WTC11 (cell line): ENCODE measurements at regions of chr2 and their contacts with region 1.

Region 1: DNA sequence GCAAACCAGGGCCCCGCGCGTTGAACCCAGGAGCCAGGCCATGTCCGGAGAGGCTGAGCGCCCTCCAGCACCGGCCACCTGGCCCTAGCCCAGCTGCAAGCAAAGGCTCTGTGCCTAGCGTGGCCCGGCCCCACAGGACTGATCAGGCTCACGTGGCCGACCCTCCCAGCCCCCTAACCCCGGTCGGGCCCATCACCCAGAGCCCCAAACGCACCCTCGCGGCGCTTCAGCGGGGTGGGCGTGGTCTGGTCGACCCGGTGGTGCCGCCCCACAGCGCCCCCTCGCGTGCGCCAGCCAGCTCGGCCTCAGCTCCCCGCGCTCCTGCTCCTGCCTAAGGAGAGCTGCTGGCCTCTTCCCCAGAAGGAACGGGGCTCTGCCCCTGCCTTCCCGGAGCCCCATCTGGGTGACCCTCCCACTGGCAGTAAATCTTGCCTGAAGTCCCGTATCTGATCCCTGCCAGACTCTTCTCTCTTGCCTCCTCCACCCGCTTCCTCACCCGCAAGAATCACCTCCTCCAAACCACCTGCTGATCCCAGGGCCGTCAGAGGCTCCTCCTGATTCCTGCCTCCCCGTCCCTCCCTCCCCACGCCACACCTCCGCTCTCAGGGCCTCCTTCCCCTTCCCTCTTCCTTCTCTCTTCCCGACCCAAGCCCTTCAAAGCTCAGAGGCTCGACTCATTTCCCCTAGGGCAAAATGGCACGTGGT is 12.3 kb upstream of the TEX51 start:
- DNase-seq: peak; percentile 88
- ATAC-seq: peak; percentile 91
- H3K4me3 Mint-ChIP-seq: peak overlapping the region; percentile 72
- H3K27ac Mint-ChIP-seq: no peak overlapping the region
- H3K4me1 Mint-ChIP-seq: peaks cover 13% of the 10 kb centered on the region
- H3K27me3 Mint-ChIP-seq: peaks cover 21% of the 10 kb centered on the region
- CTCF ChIP-seq: peak; percentile 73

Region 2: DNA sequence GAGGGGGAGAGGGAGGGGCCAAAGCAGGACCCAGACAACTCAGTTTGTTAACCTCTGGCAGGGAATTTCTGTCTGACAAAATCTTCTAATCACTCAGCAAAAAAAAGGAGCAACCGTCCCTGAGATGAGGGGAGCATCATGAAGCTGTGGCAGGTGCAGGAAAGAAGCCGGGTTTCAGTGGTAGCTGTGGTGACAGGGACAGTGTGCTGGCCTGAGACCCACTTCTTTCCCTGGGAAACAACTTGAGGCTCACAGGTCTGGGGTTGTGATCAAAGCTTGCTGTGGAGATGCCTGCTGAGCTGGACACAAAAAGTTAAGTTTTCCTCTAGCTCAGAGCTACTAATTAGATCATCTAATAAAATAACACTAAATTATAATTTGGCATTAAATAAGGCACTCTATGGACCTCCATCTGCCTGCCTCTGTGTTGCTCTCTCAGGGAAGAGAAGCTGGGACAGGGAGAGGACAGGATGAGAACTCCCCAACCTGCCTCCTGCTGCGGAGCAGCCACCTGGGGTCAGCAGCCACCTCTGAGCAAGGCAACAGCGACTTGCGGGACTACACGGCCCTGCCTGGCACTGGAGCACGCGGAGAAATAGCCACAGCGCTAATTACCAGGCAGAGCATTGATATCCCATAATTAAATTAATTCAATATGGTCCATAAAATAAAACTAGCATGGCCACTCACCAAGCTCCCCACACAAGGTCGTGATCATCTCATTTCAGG is 92.3 kb before region 1 on chr2:
- CTCF ChIA-PET with region 1: interaction called, 10 read pairs
- POLR2A ChIA-PET with region 1: no interaction called
- DNase-seq: peak; percentile 32
- ATAC-seq: peak; percentile 79
- H3K4me3 Mint-ChIP-seq: no peak overlapping the region
- H3K27ac Mint-ChIP-seq: no peak overlapping the region
- H3K4me1 Mint-ChIP-seq: peaks cover 12% of the 10 kb centered on the region
- H3K27me3 Mint-ChIP-seq: no peaks in the 10 kb centered on the region
- CTCF ChIP-seq: no peak

Region 3: DNA sequence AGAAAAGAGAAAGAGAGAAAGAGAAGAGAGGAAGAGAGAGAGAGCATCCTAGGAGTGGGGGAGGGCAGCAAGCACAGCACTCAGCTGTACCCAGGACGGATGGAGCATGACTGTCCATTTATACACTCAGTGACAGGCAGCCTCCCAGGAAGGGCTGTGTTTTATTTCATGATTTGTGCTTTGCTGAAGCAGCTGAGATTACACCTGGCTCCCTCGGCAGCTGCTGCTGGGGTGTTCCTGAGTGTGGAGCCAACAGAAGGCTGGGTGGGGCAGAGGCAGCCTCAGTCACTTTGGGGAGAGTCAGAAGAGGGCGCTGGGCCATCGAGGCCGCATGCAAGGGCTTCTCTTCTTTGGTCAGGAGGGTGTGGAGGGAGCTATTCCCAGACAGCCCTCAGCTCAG is 35.4 kb before region 1 on chr2:
- CTCF ChIA-PET with region 1: interaction called, 10 read pairs
- POLR2A ChIA-PET with region 1: no interaction called
- DNase-seq: no peak
- ATAC-seq: 0 out of 2 replicates have a peak, but pooled peaks have one; percentile 22
- H3K4me3 Mint-ChIP-seq: no peak overlapping the region
- H3K27ac Mint-ChIP-seq: no peak overlapping the region
- H3K4me1 Mint-ChIP-seq: no peaks in the 10 kb centered on the region
- H3K27me3 Mint-ChIP-seq: peaks cover 5% of the 10 kb centered on the region
- CTCF ChIP-seq: no peak

Region 4: DNA sequence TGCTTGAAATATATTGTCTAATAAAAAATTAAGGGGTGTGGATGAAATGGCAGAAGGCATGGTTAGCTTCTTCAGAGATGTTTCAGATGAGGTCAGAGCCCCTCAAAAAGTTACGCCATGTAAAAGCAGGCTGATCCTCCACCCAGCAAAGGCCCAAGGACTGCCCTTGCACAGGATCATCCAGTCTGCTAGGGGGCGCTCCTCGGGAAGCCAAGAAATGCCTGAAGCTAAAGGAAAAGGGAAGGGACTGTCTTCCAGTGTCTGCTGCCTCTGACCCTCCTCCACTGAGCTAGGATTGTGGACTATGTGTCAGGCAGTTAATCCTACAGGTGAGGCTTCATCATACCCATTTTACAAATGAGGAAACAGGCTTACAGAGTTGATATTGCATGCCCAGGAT is 21.5 kb before region 1 on chr2:
- CTCF ChIA-PET with region 1: interaction called, 14 read pairs
- POLR2A ChIA-PET with region 1: interaction called, 3 read pairs
- DNase-seq: peak; percentile 62
- ATAC-seq: peak; percentile 87
- H3K4me3 Mint-ChIP-seq: no peak overlapping the region
- H3K27ac Mint-ChIP-seq: no peak overlapping the region
- H3K4me1 Mint-ChIP-seq: no peaks in the 10 kb centered on the region; the same call in 1 of the 2 replicates
- H3K27me3 Mint-ChIP-seq: no peaks in the 10 kb centered on the region; the same call in 1 of the 2 replicates
- CTCF ChIP-seq: no peak; the same call in 1 of the 2 replicates

Region 5: GRCh38 chr2:126902152-126902835 is 15.9 kb after region 1 on chr2:
- CTCF ChIA-PET with region 1: interaction called, 11 read pairs
- POLR2A ChIA-PET with region 1: no interaction called
- DNase-seq: no peak
- ATAC-seq: no peak
- H3K4me3 Mint-ChIP-seq: no peak overlapping the region
- H3K27ac Mint-ChIP-seq: no peak overlapping the region
- H3K4me1 Mint-ChIP-seq: no peaks in the 10 kb centered on the region
- H3K27me3 Mint-ChIP-seq: peaks cover 19% of the 10 kb centered on the region
- CTCF ChIP-seq: no peak

Region 6: GRCh38 chr2:126932966-126933710 is 46.8 kb after region 1 on chr2:
- CTCF ChIA-PET with region 1: interaction called, 11 read pairs
- POLR2A ChIA-PET with region 1: no interaction called
- DNase-seq: no peak
- ATAC-seq: peak; percentile 38; the same call in 1 of the 2 replicates
- H3K4me3 Mint-ChIP-seq: no peak overlapping the region
- H3K27ac Mint-ChIP-seq: no peak overlapping the region
- H3K4me1 Mint-ChIP-seq: peaks cover 6% of the 10 kb centered on the region
- H3K27me3 Mint-ChIP-seq: peaks cover 50% of the 10 kb centered on the region
- CTCF ChIP-seq: no peak